ENCODE measurements at regions of chr12 and their contacts with region 1.

Region 1: GRCh38 chr12:10771132-10771733 is 31.2 kb downstream of the TAS2R7 start:
- DNase-seq: no peak
- H3K4me3 ChIP-seq: no peak overlapping the region
- H3K27me3 ChIP-seq: peaks cover 2% of the 10 kb centered on the region
- CTCF ChIP-seq: peak; percentile 54; the same call in 1 of the 2 replicates

Region 2: DNA sequence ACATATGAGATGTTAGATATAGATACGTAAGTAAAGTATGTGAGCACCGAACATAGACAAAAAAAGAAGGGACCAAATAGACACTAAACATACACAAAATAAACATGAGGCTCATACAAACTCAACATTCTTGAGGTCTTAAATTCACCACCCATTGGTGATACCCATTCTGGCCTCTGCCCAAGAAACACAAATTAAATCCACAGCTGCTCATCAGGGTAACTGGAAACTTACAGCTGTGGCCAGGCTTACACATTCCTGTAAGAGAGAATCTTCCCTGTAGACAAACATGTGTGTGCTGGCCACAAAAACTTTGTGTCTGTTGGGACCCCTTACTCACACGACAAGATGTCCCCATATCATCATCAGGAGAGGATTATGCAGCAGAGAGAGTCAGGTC is 180.3 kb before region 1 on chr12:
- CTCF ChIA-PET with region 1: no interaction called
- POLR2A ChIA-PET with region 1: no interaction called
- DNase-seq: no peak
- H3K4me3 ChIP-seq: no peak overlapping the region
- H3K27me3 ChIP-seq: no peaks in the 10 kb centered on the region
- CTCF ChIP-seq: no peak

Region 3: DNA sequence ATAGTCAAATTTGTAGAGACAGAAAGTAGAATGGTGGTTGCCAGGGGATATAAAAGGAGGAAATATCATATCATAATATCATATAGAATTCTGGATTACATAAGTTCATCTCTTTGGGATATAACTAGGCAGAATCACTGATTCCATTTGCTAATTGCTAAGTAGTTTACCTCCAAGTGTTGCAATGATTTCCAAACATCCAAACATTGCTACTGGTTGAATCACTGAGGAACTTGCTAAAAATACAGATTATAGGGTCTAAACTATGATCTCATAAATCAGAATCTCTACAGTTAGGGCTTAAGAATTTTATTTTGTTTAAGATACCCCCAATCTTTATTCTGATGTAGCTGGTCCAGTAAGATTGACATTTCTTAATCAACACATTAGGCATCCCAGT is 431.6 kb after region 1 on chr12:
- CTCF ChIA-PET with region 1: interaction called, 72 read pairs
- POLR2A ChIA-PET with region 1: no interaction called
- DNase-seq: no peak
- H3K4me3 ChIP-seq: no peak overlapping the region
- H3K27me3 ChIP-seq: no peaks in the 10 kb centered on the region
- CTCF ChIP-seq: no peak